Testis (tissue), 5 donors: ENCODE measurements at regions of chr6 and their contacts with region 1.

Region 1: DNA sequence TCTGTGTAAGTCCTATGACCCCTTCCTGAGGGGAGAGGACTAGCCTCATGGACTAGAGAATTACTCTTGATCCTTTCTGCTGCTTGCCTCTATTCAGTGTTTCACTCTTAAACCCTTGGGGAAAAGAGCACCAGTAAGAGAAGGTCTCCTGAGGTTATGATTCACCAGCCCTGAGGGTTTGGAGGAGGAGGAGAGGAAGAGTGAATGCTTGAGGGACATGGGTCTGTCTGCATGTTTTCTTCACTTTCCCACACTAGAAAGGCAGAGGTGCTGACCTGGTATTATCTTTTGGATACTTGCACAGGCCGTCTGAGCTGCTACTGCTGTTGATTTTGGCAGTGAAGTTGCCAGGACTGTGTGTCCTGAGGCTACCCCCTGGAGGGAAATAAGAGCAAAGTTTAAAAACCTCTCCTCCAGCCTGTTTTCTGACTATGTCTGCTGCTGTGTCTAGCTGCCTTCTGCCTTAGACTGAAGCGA is 78.3 kb downstream of the CD109 start:
- DNase-seq: peak; percentile 31
- H3K4me3 ChIP-seq: no peak overlapping the region
- H3K27ac ChIP-seq: no peak overlapping the region
- H3K4me1 ChIP-seq: no peaks in the 10 kb centered on the region
- H3K27me3 ChIP-seq: no peaks in the 10 kb centered on the region
- CTCF ChIP-seq: no peak
- POLR2A ChIP-seq: no peak

Region 2: GRCh38 chr6:72321788-72322187 is 1452.6 kb before region 1 on chr6:
- intact Hi-C with region 1: loop called (anchors 5 kb)
- DNase-seq: no peak
- H3K4me3 ChIP-seq: no peak overlapping the region
- H3K27ac ChIP-seq: no peak overlapping the region
- H3K4me1 ChIP-seq: no peaks in the 10 kb centered on the region
- H3K27me3 ChIP-seq: no peaks in the 10 kb centered on the region
- CTCF ChIP-seq: no peak
- POLR2A ChIP-seq: no peak

Region 3: DNA sequence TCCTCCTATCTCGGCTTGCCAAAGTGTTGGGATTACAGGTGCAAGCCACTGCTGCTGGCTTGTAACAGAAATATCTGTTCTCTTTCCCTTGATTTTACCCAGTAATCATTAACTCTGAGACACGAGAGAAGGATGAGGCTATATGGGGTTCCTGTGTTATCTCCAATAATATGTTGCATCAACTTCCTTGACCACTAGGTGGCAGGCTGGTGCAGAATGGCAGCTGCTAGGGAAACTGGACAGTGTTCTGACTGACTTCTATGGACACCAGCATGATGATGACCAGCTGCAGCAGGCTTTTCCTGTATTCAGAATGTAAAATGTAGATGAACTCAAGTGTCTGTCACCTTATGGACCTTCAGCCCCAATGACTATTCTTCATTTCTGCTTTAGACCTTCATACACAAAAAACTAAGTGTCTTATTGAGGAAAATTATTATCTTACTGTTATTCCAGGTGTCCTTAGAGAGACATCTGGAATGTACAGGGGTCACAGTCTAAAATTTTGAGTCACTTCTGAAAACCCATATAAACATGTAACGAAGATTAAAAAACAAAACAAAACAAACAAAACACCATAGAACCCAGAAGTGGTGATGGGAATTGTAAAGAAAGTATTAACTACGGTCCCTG is 98.8 kb before region 1 on chr6:
- intact Hi-C with region 1: no loop called
- DNase-seq: peak; percentile 88
- H3K4me3 ChIP-seq: no peak overlapping the region
- H3K27ac ChIP-seq: no peak overlapping the region
- H3K4me1 ChIP-seq: no peaks in the 10 kb centered on the region
- H3K27me3 ChIP-seq: no peaks in the 10 kb centered on the region
- CTCF ChIP-seq: peak; percentile 54 to 92 (median 78)
- POLR2A ChIP-seq: no peak